HCT116 (cell line): ENCODE measurements at regions of chr5 and their contacts with region 1.

Region 1: GRCh38 chr5:140647042-140647341 is 438 bp downstream of the NDUFA2 start:
- DNase-seq: no peak
- ATAC-seq: peak; percentile 24
- H3K4me3 ChIP-seq: peak overlapping the region; percentile 84 to 86
- H3K27ac ChIP-seq: peak overlapping the region; percentile 53
- H3K4me1 ChIP-seq: peaks cover 6 to 11% of the 10 kb centered on the region in 2 experiments
- H3K27me3 ChIP-seq: no peaks in the 10 kb centered on the region
- CTCF ChIP-seq: no peak
- POLR2A ChIP-seq: no peak
- RAD21 ChIP-seq: no peak

Region 2: GRCh38 chr5:140251527-140251973 is 395.4 kb before region 1 on chr5:
- CTCF ChIA-PET with region 1: no interaction called
- POLR2A ChIA-PET with region 1: no interaction called
- RAD21 ChIA-PET with region 1: no interaction called
- intact Hi-C with region 1: loop called (anchors 10 kb)
- DNase-seq: peak; percentile 67
- ATAC-seq: peak; percentile 82
- H3K4me3 ChIP-seq: no peak overlapping the region
- H3K27ac ChIP-seq: peak overlapping the region; percentile 41; the same call in 1 of the 2 replicates
- H3K4me1 ChIP-seq: peaks cover 13 to 35% of the 10 kb centered on the region in 2 experiments
- H3K27me3 ChIP-seq: no peaks in the 10 kb centered on the region
- CTCF ChIP-seq: no peak
- POLR2A ChIP-seq: no peak
- RAD21 ChIP-seq: peak; percentile 15; the same call in 1 of the 2 replicates

Region 3: GRCh38 chr5:140372971-140373487 is 274.0 kb before region 1 on chr5:
- CTCF ChIA-PET with region 1: no interaction called
- POLR2A ChIA-PET with region 1: no interaction called
- RAD21 ChIA-PET with region 1: no interaction called
- intact Hi-C with region 1: loop called (anchors 1 kb)
- DNase-seq: peak; percentile 71
- ATAC-seq: peak; percentile 94
- H3K4me3 ChIP-seq: no peak overlapping the region
- H3K27ac ChIP-seq: no peak overlapping the region
- H3K4me1 ChIP-seq: peaks cover 5 to 10% of the 10 kb centered on the region in 2 experiments; a peak in 3 of 4 replicates
- H3K27me3 ChIP-seq: no peaks in the 10 kb centered on the region
- CTCF ChIP-seq: peak; percentile 68 to 88 (median 80); a peak in 5 of 6 replicates
- POLR2A ChIP-seq: no peak
- RAD21 ChIP-seq: peak; percentile 93

Region 4: GRCh38 chr5:140664359-140665119 is 17.5 kb after region 1 on chr5 and contains the start of gene WDR55:
- CTCF ChIA-PET with region 1: no interaction called
- POLR2A ChIA-PET with region 1: interaction called, 17 read pairs
- RAD21 ChIA-PET with region 1: no interaction called
- intact Hi-C with region 1: loop called (anchors 1 kb)
- DNase-seq: peak; percentile 83
- ATAC-seq: peak; percentile 95
- H3K4me3 ChIP-seq: peak within 1 kb of the TSS; percentile 94 to 96
- H3K27ac ChIP-seq: peak within 1 kb of the TSS; percentile 74
- H3K4me1 ChIP-seq: peaks cover 2 to 16% of the 10 kb centered on the region in 2 experiments; a peak in 2 of 4 replicates
- H3K27me3 ChIP-seq: no peaks in the 10 kb centered on the region
- CTCF ChIP-seq: no peak
- POLR2A ChIP-seq: peak; percentile 85
- RAD21 ChIP-seq: no peak
- total RNA-seq, gene WDR55: 37.2 TPM

Region 5: GRCh38 chr5:140690941-140691924 is 44.2 kb after region 1 on chr5 and contains the starts of genes HARS1 and HARS2:
- CTCF ChIA-PET with region 1: no interaction called
- POLR2A ChIA-PET with region 1: interaction called, 13 read pairs
- RAD21 ChIA-PET with region 1: no interaction called
- intact Hi-C with region 1: no loop called
- DNase-seq: peak; percentile 97
- ATAC-seq: peak; percentile 96
- H3K4me3 ChIP-seq: peak within 1 kb of the TSS; percentile 78 to 94
- H3K27ac ChIP-seq: peak within 1 kb of the TSS; percentile 90
- H3K4me1 ChIP-seq: peaks cover 0 to 9% of the 10 kb centered on the region in 2 experiments; a peak in 2 of 4 replicates
- H3K27me3 ChIP-seq: no peaks in the 10 kb centered on the region
- CTCF ChIP-seq: no peak
- POLR2A ChIP-seq: peak; percentile 94
- RAD21 ChIP-seq: no peak
- total RNA-seq, gene HARS1: 91.1 TPM
- total RNA-seq, gene HARS2: 38.8 TPM